ENCODE measurements at regions of chr6 and their contacts with region 1.

Region 1: DNA sequence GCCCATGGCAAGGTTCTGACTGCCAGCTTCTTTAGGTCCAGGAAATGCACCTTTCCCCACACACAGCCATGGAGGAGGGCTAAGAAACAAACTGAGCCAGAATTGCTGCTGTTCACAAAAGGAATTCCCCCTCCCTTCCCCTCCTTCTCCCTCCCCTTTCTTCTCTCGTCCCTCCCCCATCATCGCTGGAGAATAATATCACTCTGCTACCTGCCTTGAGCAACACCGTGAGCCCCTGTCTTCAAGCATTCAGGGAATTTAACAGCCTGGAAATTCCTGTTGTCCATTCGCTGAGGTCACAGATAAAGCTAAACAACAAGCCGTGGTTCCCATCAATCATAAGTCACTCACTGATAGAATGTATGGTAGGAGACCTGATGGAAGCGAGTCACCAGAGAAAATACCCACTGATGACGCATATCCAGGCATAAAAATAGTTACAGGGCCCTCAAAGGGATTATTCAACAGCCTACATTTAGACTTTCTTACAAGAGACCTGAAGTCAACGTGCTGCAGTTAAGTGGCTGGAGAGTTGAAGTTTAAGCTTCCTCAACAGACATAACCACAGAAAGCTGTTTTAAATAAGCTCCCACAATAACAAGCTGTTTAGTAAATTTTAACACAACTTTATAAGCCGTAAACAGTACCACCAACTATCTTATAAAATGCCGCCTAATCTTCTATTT is 59.7 kb downstream of the HIVEP2 start:
- DNase-seq: peak in 31 of 35 experiments; percentile 17 to 90 (median 49)
- ATAC-seq: peak; percentile 82 to 90 (median 86)
- H3K4me3 ChIP-seq: peak overlapping the region; percentile 33 to 54
- H3K4me3 Mint-ChIP-seq: peak overlapping the region; percentile 87 to 94 (median 94)
- H3K27ac ChIP-seq: peak overlapping the region; percentile 89
- H3K27ac Mint-ChIP-seq: peak overlapping the region; percentile 97 to 98
- H3K4me1 ChIP-seq: peaks cover 38 to 65% of the 10 kb centered on the region in 2 experiments
- H3K4me1 Mint-ChIP-seq: peaks cover 93 to 98% (median 97%) of the 10 kb centered on the region in 3 donors
- H3K27me3 ChIP-seq: no peaks in the 10 kb centered on the region
- H3K27me3 Mint-ChIP-seq: no peaks in the 10 kb centered on the region

Region 2: DNA sequence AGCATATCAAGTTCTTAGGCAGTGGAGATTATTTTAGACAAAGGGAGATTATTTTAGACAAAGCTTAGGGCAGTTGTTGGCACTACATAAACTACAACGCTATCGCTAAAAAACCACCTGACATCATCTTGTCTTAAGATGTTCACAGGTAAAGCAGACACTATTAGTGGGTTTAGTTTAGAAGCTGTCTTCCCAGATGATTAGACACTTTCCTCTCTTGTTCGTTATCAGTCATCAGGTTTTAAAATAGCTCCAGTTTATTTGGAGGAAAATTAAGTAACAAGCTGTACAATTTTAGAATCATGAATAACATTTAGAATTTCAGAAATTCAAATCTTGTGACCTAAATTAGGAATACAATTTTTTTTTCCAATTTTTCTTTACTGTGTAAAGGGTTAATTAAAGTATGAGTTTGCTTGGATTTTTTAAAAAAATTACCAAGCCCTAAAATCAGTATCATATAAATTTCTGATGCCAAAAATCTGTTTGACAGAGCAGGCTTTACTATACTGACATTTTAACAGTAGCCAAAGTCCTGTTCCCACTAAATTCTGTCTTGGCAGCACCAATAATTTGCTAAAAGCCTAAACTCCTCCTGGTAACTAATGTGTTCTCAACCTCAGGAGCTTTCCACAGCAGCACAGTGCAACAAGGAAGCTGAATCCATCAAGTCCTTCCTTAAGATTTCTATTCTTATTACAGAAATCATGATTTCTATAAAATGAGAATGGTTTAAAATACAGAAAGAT is 49.4 kb before region 1 on chr6:
- CTCF ChIA-PET with region 1: interaction called in 1 of 2 experiments, 10 read pairs
- POLR2A ChIA-PET with region 1: interaction called, 3 to 4 read pairs
- DNase-seq: no peak
- ATAC-seq: no peak
- H3K4me3 ChIP-seq: no peak overlapping the region
- H3K4me3 Mint-ChIP-seq: no peak overlapping the region
- H3K27ac ChIP-seq: no peak overlapping the region
- H3K27ac Mint-ChIP-seq: peak overlapping the region; percentile 18 to 27
- H3K4me1 ChIP-seq: peaks cover 9 to 11% of the 10 kb centered on the region in 2 experiments
- H3K4me1 Mint-ChIP-seq: peaks cover 75 to 79% (median 76%) of the 10 kb centered on the region in 3 donors
- H3K27me3 ChIP-seq: no peaks in the 10 kb centered on the region
- H3K27me3 Mint-ChIP-seq: no peaks in the 10 kb centered on the region

Region 3: GRCh38 chr6:142871910-142872331 is 13.4 kb before region 1 on chr6:
- CTCF ChIA-PET with region 1: interaction called, 3 to 10 read pairs
- POLR2A ChIA-PET with region 1: interaction called, 10 to 11 read pairs
- DNase-seq: peak in 25 of 35 experiments; percentile 26 to 84 (median 41)
- ATAC-seq: peak; percentile 80 to 96 (median 89)
- H3K4me3 ChIP-seq: no peak overlapping the region
- H3K4me3 Mint-ChIP-seq: peak overlapping the region; percentile 14 to 64 (median 32)
- H3K27ac ChIP-seq: peak overlapping the region; percentile 76
- H3K27ac Mint-ChIP-seq: peak overlapping the region; percentile 76 to 84
- H3K4me1 ChIP-seq: peaks cover 37 to 38% of the 10 kb centered on the region in 2 experiments
- H3K4me1 Mint-ChIP-seq: peaks cover 88 to 94% (median 89%) of the 10 kb centered on the region in 3 donors
- H3K27me3 ChIP-seq: no peaks in the 10 kb centered on the region
- H3K27me3 Mint-ChIP-seq: no peaks in the 10 kb centered on the region

Region 4: GRCh38 chr6:142926494-142927270 is 41.4 kb after region 1 on chr6:
- CTCF ChIA-PET with region 1: interaction called in 1 of 2 experiments, 15 read pairs
- POLR2A ChIA-PET with region 1: interaction called, 6 to 8 read pairs
- DNase-seq: peak; percentile 52 to 90 (median 81)
- ATAC-seq: peak; percentile 83 to 89 (median 85)
- H3K4me3 ChIP-seq: peak overlapping the region; percentile 92 to 99
- H3K4me3 Mint-ChIP-seq: peak overlapping the region; percentile 88 to 96 (median 91)
- H3K27ac ChIP-seq: peak overlapping the region; percentile 97
- H3K27ac Mint-ChIP-seq: peak overlapping the region; percentile 95 to 98
- H3K4me1 ChIP-seq: peaks cover 5 to 47% of the 10 kb centered on the region in 2 experiments
- H3K4me1 Mint-ChIP-seq: peaks cover 53 to 70% (median 65%) of the 10 kb centered on the region in 3 donors
- H3K27me3 ChIP-seq: no peaks in the 10 kb centered on the region
- H3K27me3 Mint-ChIP-seq: no peaks in the 10 kb centered on the region

Region 5: GRCh38 chr6:142946181-142946923 is 61.0 kb after region 1 on chr6:
- CTCF ChIA-PET with region 1: interaction called in 1 of 2 experiments, 3 read pairs
- POLR2A ChIA-PET with region 1: interaction called, 11 to 13 read pairs
- DNase-seq: peak; percentile 68 to 97 (median 94)
- ATAC-seq: peak; percentile 40 to 56 (median 44)
- H3K4me3 ChIP-seq: peak overlapping the region; percentile 95 to 98
- H3K4me3 Mint-ChIP-seq: peak overlapping the region; percentile 91 to 93 (median 92)
- H3K27ac ChIP-seq: peak overlapping the region; percentile 100
- H3K27ac Mint-ChIP-seq: peak overlapping the region; percentile 94 to 95
- H3K4me1 ChIP-seq: peaks cover 14 to 19% of the 10 kb centered on the region in 2 experiments
- H3K4me1 Mint-ChIP-seq: peaks cover 34 to 37% (median 35%) of the 10 kb centered on the region in 3 donors
- H3K27me3 ChIP-seq: no peaks in the 10 kb centered on the region
- H3K27me3 Mint-ChIP-seq: no peaks in the 10 kb centered on the region

Measured in T-cell (primary cell).